A549 (cell line): ENCODE measurements at regions of chr1 and their contacts with region 1.

Region 1: GRCh38 chr1:204494281-204495077 is at the start of gene PIK3C2B:
- DNase-seq: peak; percentile 85 to 97
- ATAC-seq: peak; percentile 95 to 97
- H3K4me3 ChIP-seq: peak within 1 kb of the TSS; percentile 70
- H3K27ac ChIP-seq: peak within 1 kb of the TSS; percentile 87 to 94
- H3K4me1 ChIP-seq: peaks cover 24% of the 10 kb centered on the region; the same call in 2 of the 3 replicates
- CTCF ChIP-seq: peak; percentile 20; the same call in 2 of the 3 replicates
- EP300 ChIP-seq: no peak
- POLR2A ChIP-seq: peak; percentile 93
- RAD21 ChIP-seq: peak; percentile 26 to 55; a peak in 3 of 5 replicates
- polyA plus RNA-seq, gene PIK3C2B: 9.2 and 13.0 TPM in 2 replicates

Region 2: DNA sequence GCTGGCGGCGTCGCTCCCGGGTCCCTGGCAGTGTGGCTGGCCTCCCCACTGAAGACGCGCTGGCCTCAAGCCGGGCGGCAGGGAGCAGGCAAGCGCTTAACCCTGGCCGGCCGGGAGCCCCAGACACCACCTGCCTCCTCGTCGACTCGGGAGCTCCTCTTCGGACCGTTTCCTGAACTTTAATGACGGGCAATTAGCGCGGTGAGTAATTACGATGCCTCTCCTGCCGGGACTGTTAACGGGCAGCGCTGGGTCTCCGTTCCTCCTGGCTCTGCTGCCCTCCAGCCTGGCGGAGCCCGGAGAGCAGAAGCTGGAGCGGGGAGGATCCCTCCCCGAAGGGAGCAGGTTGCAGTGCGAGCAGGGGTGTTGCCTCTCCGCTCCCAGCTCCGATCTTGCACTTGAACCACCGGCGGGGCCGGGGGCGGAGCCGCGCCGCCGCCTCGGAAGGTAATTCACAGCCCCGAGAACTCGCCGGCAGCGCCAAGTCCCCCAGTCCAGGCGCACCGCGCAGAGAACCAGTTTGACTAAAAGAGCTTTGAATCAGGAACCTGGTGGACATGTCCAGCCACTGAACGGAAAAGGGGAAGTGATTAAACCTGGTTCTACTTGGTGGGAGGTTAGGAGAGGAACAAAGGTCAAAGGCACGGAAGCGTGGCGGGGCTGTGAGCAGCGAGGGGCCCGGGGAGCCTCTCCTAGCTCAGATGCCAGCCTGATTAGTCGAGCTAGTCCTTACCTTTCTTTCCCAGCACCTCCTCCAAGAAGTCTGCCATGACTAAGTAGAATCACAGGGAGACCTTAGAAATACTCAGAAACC is 116.5 kb before region 1 on chr1:
- CTCF ChIA-PET with region 1: interaction called, 4 read pairs
- POLR2A ChIA-PET with region 1: interaction called, 10 read pairs
- DNase-seq: peak; percentile 59 to 64
- ATAC-seq: peak; percentile 79 to 80
- H3K4me3 ChIP-seq: peak overlapping the region; percentile 76
- H3K27ac ChIP-seq: peak overlapping the region; percentile 94 to 95
- H3K4me1 ChIP-seq: peaks cover 33% of the 10 kb centered on the region
- CTCF ChIP-seq: no peak
- EP300 ChIP-seq: no peak
- POLR2A ChIP-seq: peak; percentile 42
- RAD21 ChIP-seq: no peak

Region 3: GRCh38 chr1:204417231-204417997 is 77.1 kb before region 1 on chr1:
- CTCF ChIA-PET with region 1: interaction called, 448 read pairs
- POLR2A ChIA-PET with region 1: interaction called, 14 read pairs
- DNase-seq: peak; percentile 94 to 97
- ATAC-seq: peak; percentile 91 to 96
- H3K4me3 ChIP-seq: peak overlapping the region; percentile 42
- H3K27ac ChIP-seq: peak overlapping the region; percentile 98 to 100
- H3K4me1 ChIP-seq: peaks cover 76% of the 10 kb centered on the region
- CTCF ChIP-seq: no peak
- EP300 ChIP-seq: peak in 1 of 2 experiments; percentile 38; a peak in 2 of 5 replicates
- POLR2A ChIP-seq: no peak
- RAD21 ChIP-seq: no peak

Region 4: DNA sequence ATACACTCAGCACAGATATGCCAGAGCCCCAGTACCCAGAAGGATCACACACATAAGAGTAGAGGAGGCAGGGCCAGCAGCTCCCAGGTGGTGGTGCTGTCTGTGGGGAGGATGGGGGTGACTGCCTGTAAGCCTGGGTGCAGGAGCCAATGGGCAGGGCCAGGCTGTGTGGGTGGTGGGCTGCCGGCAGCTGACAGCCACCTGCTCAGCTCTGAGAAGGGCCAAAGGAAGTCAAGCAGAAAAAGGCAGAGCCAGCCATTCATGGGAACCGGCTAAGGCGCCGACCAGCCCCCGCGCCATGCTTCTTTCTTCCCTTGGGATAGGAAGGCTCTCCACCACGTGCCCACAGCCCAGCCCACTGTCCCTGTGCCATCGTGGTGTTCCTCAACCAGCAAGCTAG is 14.0 kb before region 1 on chr1:
- CTCF ChIA-PET with region 1: interaction called, 20 read pairs
- POLR2A ChIA-PET with region 1: no interaction called
- DNase-seq: no peak
- ATAC-seq: no peak
- H3K4me3 ChIP-seq: no peak overlapping the region
- H3K27ac ChIP-seq: no peak overlapping the region
- H3K4me1 ChIP-seq: peaks cover 27% of the 10 kb centered on the region
- CTCF ChIP-seq: no peak
- EP300 ChIP-seq: no peak
- POLR2A ChIP-seq: no peak
- RAD21 ChIP-seq: no peak